Right cardiac atrium (tissue), 5 donors: ENCODE measurements at regions of chr21 and their contacts with region 1.

Region 1: GRCh38 chr21:26715878-26716506 is 129.2 kb downstream of the ADAMTS1 start:
- DNase-seq: peak in 2 of 3 donors; percentile 15 to 47
- ATAC-seq: peak; percentile 74 to 84
- H3K4me3 ChIP-seq: no peak overlapping the region
- H3K27ac ChIP-seq: no peak overlapping the region
- H3K4me1 ChIP-seq: no peaks in the 10 kb centered on the region
- H3K27me3 ChIP-seq: no peaks in the 10 kb centered on the region

Region 2: DNA sequence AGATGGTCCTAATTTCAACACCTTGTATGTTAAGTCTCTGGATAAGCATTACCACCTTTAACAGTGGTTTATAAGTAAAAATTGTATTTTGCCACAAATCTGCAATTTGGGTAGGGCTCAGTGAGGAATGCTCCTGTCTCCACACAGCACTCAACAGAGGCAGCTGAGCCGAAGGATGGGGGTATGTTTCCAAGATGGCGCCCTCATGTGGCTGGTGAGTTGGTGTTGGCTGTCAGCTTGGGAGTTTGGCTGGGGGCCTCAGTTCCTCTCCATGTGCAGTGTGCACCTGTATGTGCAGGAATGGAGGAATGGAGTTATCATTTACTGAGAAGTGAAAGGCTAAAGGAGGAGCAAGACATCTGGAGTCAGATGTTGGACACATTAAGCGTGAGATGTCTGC is 844.4 kb before region 1 on chr21:
- intact Hi-C with region 1: loop called in 1 of 4 experiments (anchors 10 kb)
- DNase-seq: no peak
- ATAC-seq: no peak
- H3K4me3 ChIP-seq: no peak overlapping the region
- H3K27ac ChIP-seq: no peak overlapping the region
- H3K4me1 ChIP-seq: no peaks in the 10 kb centered on the region
- H3K27me3 ChIP-seq: no peaks in the 10 kb centered on the region

Region 3: GRCh38 chr21:25881525-25882376 is 834.2 kb before region 1 on chr21:
- intact Hi-C with region 1: loop called (anchors 5 to 10 kb)
- DNase-seq: peak; percentile 65 to 85 (median 80)
- ATAC-seq: peak; percentile 71 to 76
- H3K4me3 ChIP-seq: no peak overlapping the region
- H3K27ac ChIP-seq: no peak overlapping the region
- H3K4me1 ChIP-seq: peaks cover 5% of the 10 kb centered on the region
- H3K27me3 ChIP-seq: no peaks in the 10 kb centered on the region